ENCODE measurements at regions of chr4 and their contacts with region 1.

Region 1: DNA sequence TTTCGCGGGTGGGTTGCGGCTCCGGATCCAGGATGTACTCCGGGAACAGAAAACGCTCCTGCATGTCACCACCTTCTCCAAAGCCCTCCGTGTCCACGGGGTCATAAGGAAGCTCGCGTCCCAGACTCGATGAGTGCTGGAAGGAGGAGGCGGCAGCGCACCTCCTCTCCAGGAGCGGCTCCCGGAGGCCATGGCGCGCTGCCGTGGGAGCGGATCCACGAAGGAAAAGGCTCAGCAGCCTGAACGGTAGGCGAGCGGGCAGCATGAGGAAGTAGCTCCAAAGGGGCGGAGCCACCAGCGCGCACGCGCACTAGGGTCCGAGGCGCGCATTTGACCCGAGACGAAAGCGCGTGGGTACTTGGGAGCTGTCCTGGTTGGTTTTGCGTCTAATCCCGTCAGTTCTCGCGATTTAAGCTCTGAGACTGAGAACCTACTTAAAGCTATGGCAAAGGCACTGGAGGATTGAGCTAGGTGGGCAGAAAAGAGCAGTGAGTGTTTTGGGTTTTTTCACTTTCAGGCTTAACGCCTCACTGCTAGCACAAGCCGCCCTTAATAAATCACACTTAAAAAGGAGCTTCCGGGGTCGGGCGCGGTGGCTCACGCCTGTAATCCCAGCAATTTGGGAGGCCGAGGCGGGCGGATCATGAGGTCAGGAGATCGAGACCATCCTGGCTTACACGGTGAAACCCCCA is at the start of gene NOA1:
- DNase-seq: peak; percentile 99
- ATAC-seq: peak; percentile 83
- H3K4me3 Mint-ChIP-seq: peak within 1 kb of the TSS; percentile 98
- H3K27ac Mint-ChIP-seq: peak within 1 kb of the TSS; percentile 99
- H3K4me1 Mint-ChIP-seq: peaks cover 51% of the 10 kb centered on the region
- H3K27me3 Mint-ChIP-seq: no peaks in the 10 kb centered on the region
- total RNA-seq, gene NOA1: 23.0 to 25.8 TPM

Region 2: GRCh38 chr4:56907489-56908205 is 69.8 kb before region 1 on chr4 and contains the start of gene REST:
- CTCF ChIA-PET with region 1: interaction called, 22 read pairs
- DNase-seq: peak; percentile 78
- ATAC-seq: peak; percentile 59
- H3K4me3 Mint-ChIP-seq: peak within 1 kb of the TSS; percentile 80
- H3K27ac Mint-ChIP-seq: peak within 1 kb of the TSS; percentile 71
- H3K4me1 Mint-ChIP-seq: peaks cover 43% of the 10 kb centered on the region
- H3K27me3 Mint-ChIP-seq: peaks cover 9% of the 10 kb centered on the region
- total RNA-seq, gene REST: 46.5 to 54.0 TPM

Region 3: GRCh38 chr4:56959100-56959499 is 18.4 kb before region 1 on chr4:
- CTCF ChIA-PET with region 1: interaction called, 32 read pairs
- DNase-seq: no peak
- ATAC-seq: no peak
- H3K4me3 Mint-ChIP-seq: no peak overlapping the region
- H3K27ac Mint-ChIP-seq: no peak overlapping the region
- H3K4me1 Mint-ChIP-seq: no peaks in the 10 kb centered on the region
- H3K27me3 Mint-ChIP-seq: no peaks in the 10 kb centered on the region

Measured in activated CD8-positive, alpha-beta memory T cell treated with anti-CD3 and anti-CD28 coated beads, Interleukin-2, amount 10 ng/mL, durations not matched to agents 7 days and 5 days (primary cell).